ENCODE measurements at regions of chr3 and their contacts with region 1.

Region 1: DNA sequence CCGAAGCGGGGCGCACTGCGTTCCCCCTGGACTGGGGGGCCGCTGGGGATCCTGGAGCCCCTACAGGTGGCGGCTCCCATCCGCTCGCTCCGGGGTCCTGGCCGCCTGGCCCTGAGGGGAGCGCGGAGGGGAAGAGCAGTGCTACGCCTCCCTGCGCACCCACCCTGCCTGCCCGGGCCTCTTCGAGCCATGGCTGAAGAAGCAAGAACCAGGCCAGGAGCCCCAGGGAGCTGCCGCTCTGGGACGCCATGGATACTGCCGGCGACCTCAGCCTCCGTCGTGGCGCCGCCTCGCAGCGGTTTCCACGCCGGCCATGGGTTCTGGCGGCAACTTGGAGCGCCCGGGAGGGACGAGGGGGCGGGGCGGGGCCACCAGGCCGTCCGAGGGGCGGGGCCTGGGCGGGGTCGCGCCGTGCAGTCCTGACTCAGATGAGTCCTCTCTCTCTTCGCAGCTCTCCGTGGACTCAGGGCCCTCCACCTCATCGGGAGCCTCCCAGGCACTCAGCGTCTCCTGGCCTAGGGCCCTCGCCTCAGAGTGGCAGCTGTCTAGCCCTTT is 50.9 kb downstream of the MYL3 start:
- DNase-seq: no peak
- ATAC-seq: peak; percentile 57
- H3K4me3 ChIP-seq: no peak overlapping the region
- H3K27ac ChIP-seq: no peak overlapping the region
- H3K4me1 ChIP-seq: no peaks in the 10 kb centered on the region
- H3K27me3 ChIP-seq: 0 out of 5 replicates have a peak, but pooled peaks cover 0 to 5% of the 10 kb centered on the region in 2 experiments
- CTCF ChIP-seq: no peak
- EP300 ChIP-seq: no peak
- POLR2A ChIP-seq: no peak
- RAD21 ChIP-seq: no peak

Region 2: GRCh38 chr3:46517016-46517793 is 295.1 kb before region 1 on chr3:
- CTCF ChIA-PET with region 1: no interaction called
- POLR2A ChIA-PET with region 1: no interaction called
- in situ Hi-C with region 1: no loop called
- intact Hi-C with region 1: no loop called
- DNase-seq: no peak
- ATAC-seq: no peak
- H3K4me3 ChIP-seq: no peak overlapping the region
- H3K27ac ChIP-seq: no peak overlapping the region
- H3K4me1 ChIP-seq: no peaks in the 10 kb centered on the region
- H3K27me3 ChIP-seq: no peaks in the 10 kb centered on the region; a peak in 1 of 5 replicates
- CTCF ChIP-seq: no peak
- EP300 ChIP-seq: no peak
- POLR2A ChIP-seq: no peak
- RAD21 ChIP-seq: no peak

Region 3: GRCh38 chr3:46748170-46748569 is 64.1 kb before region 1 on chr3:
- CTCF ChIA-PET with region 1: no interaction called
- POLR2A ChIA-PET with region 1: no interaction called
- in situ Hi-C with region 1: loop called (anchors 5 kb)
- intact Hi-C with region 1: loop called (anchors 1 kb)
- DNase-seq: no peak
- ATAC-seq: no peak
- H3K4me3 ChIP-seq: no peak overlapping the region
- H3K27ac ChIP-seq: no peak overlapping the region
- H3K4me1 ChIP-seq: no peaks in the 10 kb centered on the region
- H3K27me3 ChIP-seq: peaks cover 2 to 13% of the 10 kb centered on the region in 2 experiments; a peak in 4 of 5 replicates
- CTCF ChIP-seq: no peak
- EP300 ChIP-seq: no peak
- POLR2A ChIP-seq: no peak
- RAD21 ChIP-seq: no peak

Region 4: DNA sequence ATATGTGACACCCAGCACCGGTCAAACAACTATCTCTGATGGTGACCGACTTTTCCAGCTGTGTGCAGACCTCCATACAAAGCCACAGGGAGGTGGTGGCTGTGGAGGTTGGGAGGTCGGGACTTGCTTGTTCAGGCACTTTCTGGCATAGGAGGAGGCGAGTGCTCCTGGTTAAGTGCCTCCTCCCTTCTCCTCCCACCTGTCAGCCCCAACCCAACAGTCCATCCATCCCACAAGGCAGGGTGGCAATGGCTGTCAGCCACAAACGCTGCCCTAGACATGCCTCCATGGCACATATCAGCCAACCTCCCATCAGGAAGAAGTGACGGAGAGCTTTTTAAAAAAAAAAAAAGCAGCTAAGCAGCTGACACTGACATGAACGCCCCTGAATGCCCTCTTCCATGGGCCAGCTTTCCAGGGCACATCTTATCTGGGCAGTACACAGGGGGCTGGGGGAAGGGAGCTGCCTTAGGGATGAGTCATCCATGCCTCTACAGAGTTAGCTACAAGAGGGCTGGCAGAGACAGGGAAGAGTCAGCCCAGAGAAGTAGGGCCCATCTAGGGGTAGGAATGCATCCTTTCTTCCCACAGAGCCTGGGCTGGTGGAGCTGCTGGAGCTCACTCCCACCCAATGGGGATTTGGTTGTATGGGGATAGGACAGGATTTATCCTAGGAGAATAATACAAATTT is 123.0 kb after region 1 on chr3:
- CTCF ChIA-PET with region 1: no interaction called
- POLR2A ChIA-PET with region 1: no interaction called
- in situ Hi-C with region 1: no loop called
- intact Hi-C with region 1: no loop called
- DNase-seq: peak; percentile 92
- ATAC-seq: peak; percentile 90
- H3K4me3 ChIP-seq: no peak overlapping the region
- H3K27ac ChIP-seq: peak overlapping the region; percentile 12
- H3K4me1 ChIP-seq: peaks cover 92% of the 10 kb centered on the region
- H3K27me3 ChIP-seq: no peaks in the 10 kb centered on the region
- CTCF ChIP-seq: peak; percentile 64
- EP300 ChIP-seq: peak in 1 of 2 experiments; percentile 31; a peak in 1 of 4 replicates
- POLR2A ChIP-seq: no peak
- RAD21 ChIP-seq: peak; percentile 58